ENCODE measurements at regions of chr2 and their contacts with region 1.

Region 1: GRCh38 chr2:178072383-178073301 is at the start of gene PDE11A:
- DNase-seq: peak; percentile 89 to 94
- H3K4me3 ChIP-seq: peak within 1 kb of the TSS; percentile 48
- H3K4me3 Mint-ChIP-seq: peak within 1 kb of the TSS; percentile 87
- H3K27ac Mint-ChIP-seq: peak within 1 kb of the TSS; percentile 60
- H3K4me1 ChIP-seq: peaks cover 7% of the 10 kb centered on the region; the same call in 1 of the 2 replicates
- H3K4me1 Mint-ChIP-seq: peaks cover 23% of the 10 kb centered on the region
- H3K27me3 ChIP-seq: no peaks in the 10 kb centered on the region
- H3K27me3 Mint-ChIP-seq: peaks cover 16% of the 10 kb centered on the region
- CTCF ChIP-seq: no peak
- total RNA-seq, gene PDE11A: 0.21 and 0.25 TPM in 2 replicates

Region 2: DNA sequence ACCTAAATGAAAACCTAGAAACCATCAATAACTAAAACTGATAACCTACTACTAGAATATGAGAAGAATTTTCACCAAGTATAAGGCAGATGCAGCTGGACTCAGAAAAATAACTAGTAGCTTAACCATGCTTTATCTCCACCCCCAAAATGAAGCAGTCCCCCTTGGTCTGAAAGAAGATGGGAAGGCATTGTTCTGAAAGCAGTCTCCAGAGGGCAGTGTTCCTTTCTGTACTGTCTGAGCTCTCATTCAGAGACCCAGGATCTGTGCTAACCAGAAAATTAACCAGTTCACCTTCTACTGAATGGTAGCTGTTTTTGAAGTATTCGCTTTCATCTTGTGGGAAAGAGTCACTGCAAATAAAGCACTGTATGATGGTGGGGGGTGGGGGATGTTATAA is 273.1 kb before region 1 on chr2:
- CTCF ChIA-PET with region 1: no interaction called
- POLR2A ChIA-PET with region 1: no interaction called
- intact Hi-C with region 1: loop called (anchors 10 kb)
- DNase-seq: peak in 1 of 2 experiments; percentile 22
- H3K4me3 ChIP-seq: no peak overlapping the region
- H3K4me3 Mint-ChIP-seq: no peak overlapping the region
- H3K27ac Mint-ChIP-seq: no peak overlapping the region
- H3K4me1 ChIP-seq: no peaks in the 10 kb centered on the region
- H3K4me1 Mint-ChIP-seq: no peaks in the 10 kb centered on the region
- H3K27me3 ChIP-seq: no peaks in the 10 kb centered on the region; the same call in 1 of the 2 replicates
- H3K27me3 Mint-ChIP-seq: peaks cover 4% of the 10 kb centered on the region
- CTCF ChIP-seq: peak; percentile 30 to 62

Region 3: GRCh38 chr2:177906041-177906718 is 166.5 kb before region 1 on chr2:
- CTCF ChIA-PET with region 1: no interaction called
- POLR2A ChIA-PET with region 1: no interaction called
- intact Hi-C with region 1: loop called (anchors 1 kb)
- DNase-seq: peak; percentile 68 to 83
- H3K4me3 ChIP-seq: no peak overlapping the region
- H3K4me3 Mint-ChIP-seq: no peak overlapping the region
- H3K27ac Mint-ChIP-seq: no peak overlapping the region
- H3K4me1 ChIP-seq: no peaks in the 10 kb centered on the region
- H3K4me1 Mint-ChIP-seq: peaks cover 8% of the 10 kb centered on the region
- H3K27me3 ChIP-seq: no peaks in the 10 kb centered on the region; the same call in 1 of the 2 replicates
- H3K27me3 Mint-ChIP-seq: peaks cover 4% of the 10 kb centered on the region
- CTCF ChIP-seq: peak; percentile 86 to 94

Region 4: DNA sequence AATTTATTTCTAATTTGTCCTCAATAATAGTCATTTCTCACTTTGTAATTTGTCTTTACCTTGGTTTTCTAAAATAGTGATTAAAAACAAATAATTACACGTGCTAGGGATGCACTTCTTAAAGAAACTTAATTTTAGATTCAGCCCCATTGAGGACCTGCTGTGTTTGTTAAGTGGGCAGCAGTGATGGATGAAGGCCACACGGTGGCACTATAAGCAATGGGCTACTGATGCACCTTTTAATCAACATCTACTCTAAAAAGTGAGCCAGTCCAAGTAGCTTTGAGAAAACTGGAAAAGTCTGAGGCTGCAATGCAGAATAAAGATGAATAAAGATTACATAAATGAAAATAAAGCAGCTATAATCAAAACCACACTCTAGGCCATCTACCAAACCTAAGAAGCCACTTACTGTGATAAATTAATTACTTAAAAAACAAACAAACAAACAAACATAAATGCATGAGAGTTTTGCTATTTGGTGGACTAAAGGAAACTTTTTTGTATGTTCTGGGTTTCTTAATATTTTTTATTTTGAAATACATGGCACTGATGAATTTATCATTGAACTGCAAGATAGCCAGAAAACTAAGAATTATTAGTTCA is 89.4 kb before region 1 on chr2:
- CTCF ChIA-PET with region 1: no interaction called
- POLR2A ChIA-PET with region 1: no interaction called
- intact Hi-C with region 1: loop called (anchors 2 kb)
- DNase-seq: peak; percentile 35 to 48
- H3K4me3 ChIP-seq: no peak overlapping the region
- H3K4me3 Mint-ChIP-seq: no peak overlapping the region
- H3K27ac Mint-ChIP-seq: no peak overlapping the region
- H3K4me1 ChIP-seq: no peaks in the 10 kb centered on the region
- H3K4me1 Mint-ChIP-seq: no peaks in the 10 kb centered on the region
- H3K27me3 ChIP-seq: no peaks in the 10 kb centered on the region; the same call in 1 of the 2 replicates
- H3K27me3 Mint-ChIP-seq: peaks cover 6% of the 10 kb centered on the region
- CTCF ChIP-seq: peak; percentile 79 to 86